ENCODE measurements at regions of chr4 and their contacts with region 1.

Region 1: DNA sequence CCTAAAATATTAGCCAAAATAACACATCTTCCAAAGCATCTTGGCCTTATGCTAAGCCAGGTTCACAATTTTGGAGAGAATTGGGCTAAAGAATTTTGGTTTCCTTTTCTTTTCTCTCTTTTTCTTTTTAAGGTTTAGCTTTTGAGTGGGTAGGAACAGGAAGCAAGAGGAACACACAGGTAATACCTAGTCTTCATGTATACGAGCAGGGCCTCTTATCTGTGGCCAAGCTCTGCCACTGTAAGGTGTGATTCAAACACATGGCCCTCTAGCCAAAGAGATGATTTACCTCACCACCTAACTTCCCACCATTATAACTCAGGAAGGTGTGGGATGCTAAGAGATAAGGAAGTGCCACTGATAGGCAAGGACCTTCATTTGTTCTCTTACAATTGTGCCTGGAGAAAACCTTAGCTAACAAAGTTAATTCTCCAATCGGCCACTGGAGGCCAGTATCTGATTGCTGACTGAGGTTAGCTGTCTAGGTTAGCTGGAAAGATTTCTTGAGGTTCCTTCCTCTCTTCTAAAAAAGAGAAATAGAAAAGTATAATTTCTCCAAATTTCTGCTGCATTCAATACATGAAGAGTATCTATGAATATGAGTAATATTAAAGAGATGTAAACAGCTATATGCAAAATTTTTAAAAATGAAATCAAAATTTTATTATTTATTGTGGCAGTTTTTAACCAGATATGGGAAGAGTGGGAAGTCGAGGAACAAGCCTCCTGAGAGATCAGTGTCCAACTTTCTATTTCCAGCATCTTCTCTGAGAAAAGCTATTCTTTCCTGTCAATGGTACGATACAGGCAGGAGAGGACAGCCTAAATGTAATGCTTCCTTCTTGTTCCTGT is 30.1 kb upstream of the BBS7 start:
- DNase-seq: peak; percentile 12
- ATAC-seq: peak; percentile 93
- H3K4me3 ChIP-seq: no peak overlapping the region
- H3K27ac ChIP-seq: no peak overlapping the region
- H3K4me1 ChIP-seq: no peaks in the 10 kb centered on the region
- H3K27me3 ChIP-seq: no peaks in the 10 kb centered on the region
- CTCF ChIP-seq: peak; percentile 67 to 85 (median 84)
- EP300 ChIP-seq: no peak
- POLR2A ChIP-seq: no peak
- RAD21 ChIP-seq: peak; percentile 99

Region 2: GRCh38 chr4:121800638-121800960 is 99.8 kb before region 1 on chr4:
- CTCF ChIA-PET with region 1: no interaction called
- POLR2A ChIA-PET with region 1: no interaction called
- RAD21 ChIA-PET with region 1: no interaction called
- SMC1A ChIA-PET with region 1: no interaction called
- in situ Hi-C with region 1: no loop called
- intact Hi-C with region 1: no loop called
- DNase-seq: no peak
- ATAC-seq: peak; percentile 53
- H3K4me3 ChIP-seq: peak overlapping the region; percentile 79
- H3K27ac ChIP-seq: peak overlapping the region; percentile 94
- H3K4me1 ChIP-seq: peaks cover 24% of the 10 kb centered on the region
- H3K27me3 ChIP-seq: no peaks in the 10 kb centered on the region
- CTCF ChIP-seq: no peak
- EP300 ChIP-seq: no peak
- POLR2A ChIP-seq: no peak
- RAD21 ChIP-seq: no peak

Region 3: GRCh38 chr4:121877041-121877777 is 23.1 kb before region 1 on chr4:
- CTCF ChIA-PET with region 1: interaction called, 15 read pairs
- POLR2A ChIA-PET with region 1: no interaction called
- RAD21 ChIA-PET with region 1: no interaction called
- SMC1A ChIA-PET with region 1: interaction called, 5 read pairs
- in situ Hi-C with region 1: no loop called
- intact Hi-C with region 1: no loop called
- DNase-seq: no peak
- ATAC-seq: no peak
- H3K4me3 ChIP-seq: no peak overlapping the region
- H3K27ac ChIP-seq: no peak overlapping the region
- H3K4me1 ChIP-seq: no peaks in the 10 kb centered on the region
- H3K27me3 ChIP-seq: no peaks in the 10 kb centered on the region; a peak in 1 of 4 replicates
- CTCF ChIP-seq: no peak
- EP300 ChIP-seq: no peak
- POLR2A ChIP-seq: no peak
- RAD21 ChIP-seq: no peak

Region 4: DNA sequence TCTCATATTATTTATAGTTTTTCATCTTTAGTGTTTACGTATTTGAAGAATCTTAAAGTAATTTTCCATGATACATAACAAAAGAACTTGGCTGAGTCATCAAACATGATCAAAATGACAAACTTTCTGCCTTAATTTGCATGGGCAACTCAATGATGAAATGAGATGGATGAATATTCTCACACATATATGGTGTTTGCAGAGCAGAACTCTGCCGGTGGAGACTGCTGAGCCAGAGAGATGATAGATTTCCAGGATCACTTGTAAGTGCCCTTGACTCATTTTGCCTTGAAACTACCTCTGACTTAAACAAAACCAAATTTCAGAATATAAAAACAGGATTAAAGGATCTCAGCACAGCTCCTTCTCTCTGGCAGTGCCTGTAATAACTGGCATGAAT is 13.3 kb after region 1 on chr4:
- CTCF ChIA-PET with region 1: interaction called, 12 read pairs
- POLR2A ChIA-PET with region 1: no interaction called
- RAD21 ChIA-PET with region 1: interaction called, 3 read pairs
- SMC1A ChIA-PET with region 1: interaction called, 6 read pairs
- in situ Hi-C with region 1: no loop called
- intact Hi-C with region 1: no loop called
- DNase-seq: no peak
- ATAC-seq: no peak
- H3K4me3 ChIP-seq: no peak overlapping the region
- H3K27ac ChIP-seq: no peak overlapping the region
- H3K4me1 ChIP-seq: no peaks in the 10 kb centered on the region
- H3K27me3 ChIP-seq: 0 out of 4 replicates have a peak, but pooled peaks cover 0 to 2% of the 10 kb centered on the region in 2 experiments
- CTCF ChIP-seq: no peak
- EP300 ChIP-seq: no peak
- POLR2A ChIP-seq: no peak
- RAD21 ChIP-seq: no peak

Region 5: DNA sequence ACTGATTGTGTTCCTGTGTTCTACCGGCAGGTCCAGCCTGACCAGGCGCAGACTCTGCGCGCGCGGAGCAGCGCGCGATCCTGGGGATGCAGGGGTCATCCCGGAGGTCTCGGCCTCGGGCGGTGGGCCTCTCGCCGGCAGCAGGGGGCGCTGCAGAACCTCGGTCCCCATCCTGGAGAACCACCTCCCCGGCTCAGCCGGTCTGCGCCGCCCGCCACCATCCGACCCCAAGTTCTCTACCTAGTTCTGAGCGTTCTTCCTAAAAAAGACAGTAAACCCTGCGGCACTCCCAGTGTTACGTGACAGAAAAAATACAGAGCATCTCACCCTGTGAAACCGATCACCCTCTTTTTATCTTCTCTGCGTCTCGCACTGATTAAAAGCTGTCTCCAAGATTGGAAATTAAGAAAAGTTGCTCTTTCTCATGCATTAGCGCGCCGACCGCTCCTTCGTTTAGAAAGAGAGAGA is 49.9 kb after region 1 on chr4:
- CTCF ChIA-PET with region 1: interaction called, 16 read pairs
- POLR2A ChIA-PET with region 1: no interaction called
- RAD21 ChIA-PET with region 1: no interaction called
- SMC1A ChIA-PET with region 1: interaction called, 8 read pairs
- in situ Hi-C with region 1: no loop called
- intact Hi-C with region 1: no loop called
- DNase-seq: no peak
- ATAC-seq: peak; percentile 92
- H3K4me3 ChIP-seq: peak overlapping the region; percentile 63
- H3K27ac ChIP-seq: no peak overlapping the region
- H3K4me1 ChIP-seq: peaks cover 4% of the 10 kb centered on the region
- H3K27me3 ChIP-seq: peaks cover 2 to 22% of the 10 kb centered on the region in 2 experiments
- CTCF ChIP-seq: peak; percentile 47 to 71 (median 67)
- EP300 ChIP-seq: no peak
- POLR2A ChIP-seq: no peak
- RAD21 ChIP-seq: peak; percentile 56

Region 6: DNA sequence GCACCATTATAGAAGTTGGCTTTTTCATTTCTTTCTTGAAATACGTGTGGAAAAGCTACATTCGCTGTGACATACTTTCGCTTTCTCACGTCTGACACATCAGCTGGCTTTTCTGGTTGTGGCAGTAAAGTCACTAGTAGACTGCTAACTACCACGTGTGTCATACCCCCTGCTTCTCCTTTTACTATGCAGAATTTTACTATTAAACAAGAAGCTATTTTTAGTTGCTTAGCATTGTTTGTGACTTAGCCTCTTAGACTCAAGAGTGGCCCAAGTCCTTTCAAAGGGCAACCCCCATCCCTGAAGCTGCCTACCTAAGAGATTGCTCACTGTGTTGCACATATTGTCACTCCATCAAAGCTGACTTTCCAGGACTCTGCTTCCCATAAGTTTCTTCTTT is 558.3 kb after region 1 on chr4:
- CTCF ChIA-PET with region 1: no interaction called
- POLR2A ChIA-PET with region 1: no interaction called
- RAD21 ChIA-PET with region 1: no interaction called
- SMC1A ChIA-PET with region 1: no interaction called
- in situ Hi-C with region 1: no loop called
- intact Hi-C with region 1: loop called (anchors 10 kb)
- DNase-seq: no peak
- ATAC-seq: peak; percentile 64
- H3K4me3 ChIP-seq: 0 out of 2 replicates have a peak overlapping the region, but pooled peaks have one; percentile 18
- H3K27ac ChIP-seq: no peak overlapping the region
- H3K4me1 ChIP-seq: peaks cover under 1% of the 10 kb centered on the region
- H3K27me3 ChIP-seq: no peaks in the 10 kb centered on the region
- CTCF ChIP-seq: no peak
- EP300 ChIP-seq: no peak
- POLR2A ChIP-seq: no peak
- RAD21 ChIP-seq: no peak

Region 7: DNA sequence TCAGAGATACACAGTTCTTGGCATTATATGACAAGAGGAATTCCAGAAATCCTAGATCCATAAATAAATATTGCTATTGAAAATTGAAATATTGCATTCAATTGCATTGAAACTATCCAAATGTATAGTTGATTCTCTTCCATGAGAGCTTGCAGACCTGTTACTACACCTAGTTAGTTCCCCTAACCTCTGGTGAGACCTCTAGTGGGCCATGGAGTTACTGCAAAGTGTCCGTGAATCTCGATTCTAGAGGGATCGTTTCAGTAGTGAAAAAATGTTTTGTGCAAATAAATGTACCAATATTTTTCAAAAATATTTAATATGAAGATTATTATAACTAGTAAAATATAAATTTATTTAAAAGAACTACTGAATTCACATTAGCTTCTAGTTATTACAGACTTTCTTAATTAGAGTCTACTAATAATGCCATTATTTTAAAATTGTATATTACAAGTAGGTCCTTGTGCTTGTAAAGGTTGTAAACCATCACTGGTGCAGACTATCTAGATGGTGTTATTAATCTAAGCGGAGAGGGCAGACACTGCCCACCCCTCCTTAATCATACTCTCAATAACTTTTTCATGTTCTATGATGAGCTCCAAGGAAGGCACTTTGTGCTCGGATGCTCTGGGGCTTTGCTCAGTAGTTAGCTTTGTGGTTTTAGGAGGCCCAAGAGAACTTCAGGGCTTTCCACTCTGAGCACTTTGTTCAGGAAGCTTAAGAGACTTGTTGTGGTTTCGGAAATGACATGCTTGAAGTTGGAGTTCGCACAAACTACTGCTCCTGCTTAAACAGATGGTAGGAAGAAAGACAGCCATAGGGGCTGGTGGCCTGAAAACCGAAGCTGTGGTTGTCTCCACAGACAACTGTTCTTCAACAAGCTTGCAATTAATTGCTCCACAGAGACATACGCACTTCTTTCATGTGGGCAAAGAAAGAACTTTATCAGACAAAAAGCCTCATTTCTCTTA is 677.7 kb after region 1 on chr4:
- CTCF ChIA-PET with region 1: interaction called, 85 read pairs
- POLR2A ChIA-PET with region 1: no interaction called
- RAD21 ChIA-PET with region 1: interaction called, 51 read pairs
- SMC1A ChIA-PET with region 1: interaction called, 45 read pairs
- in situ Hi-C with region 1: loop called (anchors 5 kb)
- intact Hi-C with region 1: loop called (anchors 1 kb)
- DNase-seq: no peak
- ATAC-seq: peak; percentile 97
- H3K4me3 ChIP-seq: no peak overlapping the region
- H3K27ac ChIP-seq: no peak overlapping the region
- H3K4me1 ChIP-seq: peaks cover 7% of the 10 kb centered on the region
- H3K27me3 ChIP-seq: 0 out of 4 replicates have a peak, but pooled peaks cover 0 to 2% of the 10 kb centered on the region in 2 experiments
- CTCF ChIP-seq: peak; percentile 66 to 85 (median 85)
- EP300 ChIP-seq: no peak
- POLR2A ChIP-seq: no peak
- RAD21 ChIP-seq: peak; percentile 69

Region 8: DNA sequence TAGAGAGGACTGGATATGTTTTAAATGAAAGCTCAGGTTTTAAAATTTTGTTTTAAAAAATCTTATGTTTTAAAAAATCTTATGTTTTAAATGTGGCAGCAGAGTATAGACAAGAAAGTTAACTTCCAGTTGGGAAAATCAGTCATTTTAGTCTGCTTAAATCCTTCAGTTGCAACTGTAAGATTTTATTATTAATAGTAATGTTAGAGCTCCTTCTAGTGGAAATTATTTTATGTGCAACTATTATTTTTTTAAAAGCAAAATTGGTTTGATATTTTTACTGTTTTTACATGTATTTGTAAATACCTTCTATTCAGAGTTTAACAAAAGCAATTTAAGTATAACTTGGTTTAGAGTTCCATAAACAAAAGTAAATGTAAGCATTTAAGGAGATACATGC is 1030.5 kb after region 1 on chr4:
- CTCF ChIA-PET with region 1: interaction called, 11 read pairs
- POLR2A ChIA-PET with region 1: no interaction called
- RAD21 ChIA-PET with region 1: interaction called, 6 read pairs
- SMC1A ChIA-PET with region 1: interaction called, 3 read pairs
- in situ Hi-C with region 1: no loop called
- intact Hi-C with region 1: no loop called
- DNase-seq: no peak
- ATAC-seq: no peak
- H3K4me3 ChIP-seq: no peak overlapping the region
- H3K27ac ChIP-seq: no peak overlapping the region
- H3K4me1 ChIP-seq: no peaks in the 10 kb centered on the region
- H3K27me3 ChIP-seq: no peaks in the 10 kb centered on the region
- CTCF ChIP-seq: peak in 2 of 3 experiments; percentile 21 to 46; a peak in 3 of 6 replicates
- EP300 ChIP-seq: no peak
- POLR2A ChIP-seq: no peak
- RAD21 ChIP-seq: peak; percentile 20; the same call in 1 of the 2 replicates

Measured in GM12878 (cell line).